AG04449 (cell line): ENCODE measurements at regions of chr2 and their contacts with region 1.

Region 1: DNA sequence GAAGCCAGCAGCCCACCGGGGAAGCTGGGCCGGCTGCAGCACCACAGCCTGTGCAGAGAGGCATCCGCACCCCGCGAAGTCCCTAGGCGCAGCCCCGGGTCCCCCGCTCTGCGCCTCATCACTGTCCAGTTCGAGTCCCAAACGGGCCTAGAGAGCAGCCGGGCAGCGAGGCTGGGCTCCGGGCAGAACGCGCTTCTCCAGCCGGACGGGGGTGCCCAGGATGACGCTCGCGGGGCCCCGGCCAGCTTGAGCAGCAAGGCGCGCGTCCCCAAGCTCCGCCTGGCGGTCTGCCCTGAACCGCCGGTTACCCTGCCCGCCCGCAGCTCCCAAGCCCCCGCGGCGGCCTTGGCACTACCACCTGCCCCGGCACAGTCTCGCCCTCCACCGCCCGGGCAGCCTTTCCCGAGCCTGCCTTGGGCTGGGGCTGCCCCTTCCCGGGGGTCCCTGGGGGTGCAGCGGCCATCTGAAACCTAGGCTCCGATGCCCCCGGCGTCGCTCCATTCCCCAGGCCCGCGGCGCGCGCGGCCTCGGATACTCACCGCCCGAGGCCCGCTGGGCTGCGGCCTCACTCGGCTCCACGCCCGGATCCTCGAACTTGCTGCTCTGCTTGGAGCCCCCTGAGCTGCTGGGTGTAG is 591 bp downstream of the SLC16A14 start:
- DNase-seq: no peak
- H3K4me3 ChIP-seq: peak overlapping the region; percentile 57
- CTCF ChIP-seq: peak; percentile 22

Region 2: GRCh38 chr2:230007931-230008707 is 60.0 kb before region 1 on chr2:
- CTCF ChIA-PET with region 1: interaction called, 33 read pairs
- POLR2A ChIA-PET with region 1: no interaction called
- DNase-seq: no peak
- H3K4me3 ChIP-seq: no peak overlapping the region
- CTCF ChIP-seq: peak; percentile 67

Region 3: DNA sequence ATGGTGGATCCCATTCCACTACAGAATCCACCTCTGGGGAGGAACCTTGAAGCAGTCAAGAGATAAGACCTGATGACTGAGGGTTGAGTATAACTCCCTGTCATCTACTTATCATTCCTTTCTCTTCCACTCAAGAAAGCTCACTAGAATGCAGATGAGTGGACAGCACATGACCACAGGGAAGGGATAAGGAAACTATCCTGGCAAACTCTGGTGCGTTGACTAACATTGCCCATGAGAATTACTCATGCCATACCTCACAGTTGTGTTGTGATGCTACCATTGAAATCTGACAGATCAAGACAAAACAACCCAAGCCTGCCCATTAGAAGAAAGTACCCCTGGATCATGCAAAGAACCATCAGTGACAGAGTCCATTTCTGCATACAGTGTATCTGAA is 25.9 kb before region 1 on chr2:
- CTCF ChIA-PET with region 1: interaction called, 11 read pairs
- POLR2A ChIA-PET with region 1: no interaction called
- DNase-seq: no peak
- H3K4me3 ChIP-seq: no peak overlapping the region
- CTCF ChIP-seq: no peak

Region 4: DNA sequence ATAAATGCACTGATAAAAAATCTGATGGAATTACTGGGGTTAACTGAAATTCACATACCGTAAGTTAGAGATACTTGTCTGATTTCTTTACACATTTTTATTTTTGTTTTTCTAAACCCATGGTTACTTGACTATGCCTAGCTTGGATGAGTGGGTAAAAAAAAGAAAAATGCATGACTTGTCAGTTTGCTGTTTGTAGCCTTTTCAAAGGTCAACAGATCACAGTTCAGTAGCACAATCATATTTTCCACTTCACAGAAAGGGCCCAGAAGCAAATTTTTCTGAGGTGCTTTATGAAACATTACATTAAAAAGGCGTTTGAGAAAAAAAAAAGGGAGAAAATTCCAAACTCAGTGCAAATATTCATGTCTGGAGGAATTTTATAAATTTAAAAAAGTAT is 15.8 kb before region 1 on chr2:
- CTCF ChIA-PET with region 1: interaction called, 13 read pairs
- POLR2A ChIA-PET with region 1: no interaction called
- DNase-seq: no peak
- H3K4me3 ChIP-seq: no peak overlapping the region
- CTCF ChIP-seq: no peak

Region 5: DNA sequence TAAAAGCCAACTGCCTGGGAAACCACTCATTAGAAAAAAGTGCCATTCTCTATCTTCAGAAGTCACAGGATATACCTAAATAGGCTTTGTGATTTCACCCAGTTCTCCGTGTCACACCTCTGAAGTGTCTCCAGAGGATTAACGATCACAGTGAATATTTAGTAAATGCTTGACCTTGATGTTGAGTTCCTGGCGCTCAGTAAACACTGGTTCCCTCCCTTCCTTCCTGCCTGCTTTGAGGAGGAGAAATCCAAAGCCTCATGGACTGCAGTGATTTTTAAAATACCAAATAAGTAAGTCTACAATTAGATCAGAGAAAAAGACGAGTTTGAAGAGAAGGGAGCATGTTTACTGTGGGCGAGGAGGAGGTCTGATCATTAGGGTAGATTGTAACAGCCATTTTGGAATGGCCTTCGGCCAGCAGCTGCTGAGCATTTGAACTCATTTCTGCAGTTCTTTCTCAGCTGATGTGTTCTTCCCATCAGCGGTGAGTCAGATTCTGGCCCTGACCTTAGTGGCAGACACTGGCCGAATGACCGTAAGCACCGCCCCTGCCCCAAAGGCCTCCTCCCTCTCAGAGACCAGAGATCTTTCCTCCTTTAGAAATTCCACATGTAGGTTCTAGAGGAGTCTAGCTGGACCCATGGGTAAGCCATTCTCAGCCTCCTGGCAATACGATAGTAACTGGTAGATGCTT is 62.7 kb after region 1 on chr2:
- CTCF ChIA-PET with region 1: interaction called, 11 read pairs
- POLR2A ChIA-PET with region 1: no interaction called
- DNase-seq: no peak
- H3K4me3 ChIP-seq: no peak overlapping the region
- CTCF ChIP-seq: no peak

Region 6: GRCh38 chr2:230160112-230160660 is 92.1 kb after region 1 on chr2:
- CTCF ChIA-PET with region 1: interaction called, 30 read pairs
- POLR2A ChIA-PET with region 1: no interaction called
- DNase-seq: no peak
- H3K4me3 ChIP-seq: no peak overlapping the region
- CTCF ChIP-seq: peak; percentile 63